ENCODE measurements at regions of chr1 and their contacts with region 1.

Region 1: DNA sequence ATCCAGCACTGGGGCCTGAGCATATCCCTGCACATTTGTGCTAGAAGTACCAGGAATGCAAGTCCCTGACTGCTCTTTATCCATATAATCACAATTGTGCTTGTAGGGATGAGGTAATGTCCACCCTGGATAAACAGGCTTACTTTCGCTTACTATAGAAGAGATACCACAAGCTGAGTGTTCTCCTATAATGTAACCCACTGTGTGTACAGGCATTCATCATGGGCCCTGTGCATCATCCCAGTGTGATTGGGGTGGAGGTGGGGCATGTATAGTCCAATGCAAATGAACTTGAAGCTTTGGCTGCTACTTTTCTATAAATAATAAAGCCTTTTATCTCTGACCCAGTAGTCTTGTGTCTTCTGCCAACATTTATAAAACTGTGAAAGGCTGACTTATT is 69.3 kb downstream of the MAN1A2 start:
- DNase-seq: peak; percentile 73
- ATAC-seq: peak; percentile 92
- H3K4me3 ChIP-seq: no peak overlapping the region
- H3K27ac ChIP-seq: no peak overlapping the region
- H3K4me1 ChIP-seq: no peaks in the 10 kb centered on the region
- H3K27me3 ChIP-seq: no peaks in the 10 kb centered on the region
- CTCF ChIP-seq: no peak
- POLR2A ChIP-seq: no peak
- RAD21 ChIP-seq: no peak

Region 2: DNA sequence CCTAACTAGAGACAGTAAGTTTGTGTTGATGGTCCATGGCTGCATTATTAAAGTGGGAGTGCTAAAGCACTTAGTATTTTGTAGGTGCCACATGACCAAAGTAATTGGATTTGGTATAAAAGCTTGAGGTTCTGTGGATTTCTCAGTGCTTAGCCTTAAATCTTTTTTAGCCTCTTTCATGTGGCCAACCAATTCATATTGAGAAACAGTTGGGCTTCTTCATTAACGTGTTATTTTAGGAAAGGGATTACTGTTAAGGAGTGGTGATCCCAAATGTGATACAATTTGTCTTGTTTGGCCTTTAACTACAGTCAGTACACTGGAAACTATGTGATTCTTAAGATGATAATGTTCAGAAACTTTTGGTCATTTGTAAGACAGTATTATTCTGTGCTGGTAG is 43.7 kb before region 1 on chr1:
- CTCF ChIA-PET with region 1: no interaction called
- POLR2A ChIA-PET with region 1: no interaction called
- dilution Hi-C with region 1: no loop called
- in situ Hi-C with region 1: no loop called
- intact Hi-C with region 1: loop called (anchors 5 kb)
- DNase-seq: no peak
- ATAC-seq: no peak
- H3K4me3 ChIP-seq: no peak overlapping the region
- H3K27ac ChIP-seq: no peak overlapping the region
- H3K4me1 ChIP-seq: no peaks in the 10 kb centered on the region
- H3K27me3 ChIP-seq: no peaks in the 10 kb centered on the region
- CTCF ChIP-seq: no peak
- POLR2A ChIP-seq: no peak
- RAD21 ChIP-seq: no peak

Region 3: DNA sequence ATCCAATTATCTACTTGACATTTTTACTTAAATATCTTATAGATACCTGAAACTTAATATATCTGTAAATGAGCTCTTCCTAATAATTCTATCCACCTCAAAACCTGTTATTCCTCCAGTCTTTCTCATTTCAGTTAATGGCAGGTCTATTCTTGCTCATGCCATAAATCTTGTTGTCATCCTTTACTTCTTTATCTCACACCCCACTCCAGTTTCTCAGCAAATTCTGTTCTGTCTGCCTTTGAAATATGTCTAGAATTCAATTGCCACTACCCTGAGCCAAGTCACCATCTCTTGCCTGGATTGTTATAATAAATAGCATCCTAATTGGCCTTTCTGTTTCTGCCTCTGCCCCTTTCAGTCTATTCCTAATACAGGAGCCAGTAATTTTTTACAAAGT is 36.5 kb after region 1 on chr1:
- CTCF ChIA-PET with region 1: no interaction called
- POLR2A ChIA-PET with region 1: no interaction called
- dilution Hi-C with region 1: no loop called
- in situ Hi-C with region 1: no loop called
- intact Hi-C with region 1: loop called (anchors 5 kb)
- DNase-seq: no peak
- ATAC-seq: no peak
- H3K4me3 ChIP-seq: no peak overlapping the region
- H3K27ac ChIP-seq: no peak overlapping the region
- H3K4me1 ChIP-seq: no peaks in the 10 kb centered on the region
- H3K27me3 ChIP-seq: no peaks in the 10 kb centered on the region
- CTCF ChIP-seq: no peak
- POLR2A ChIP-seq: no peak
- RAD21 ChIP-seq: no peak